Activated CD4-positive, alpha-beta T cell treated with anti-CD3 and anti-CD28 coated beads, Interleukin-2, amount 10 ng/mL, durations not matched to agents 24 days and 14 days (primary cell): ENCODE measurements at regions of chr9 and their contacts with region 1.

Region 1: GRCh38 chr9:129783516-129784361 is 19.2 kb upstream of the TOR1B start:
- DNase-seq: peak; percentile 94
- H3K4me3 Mint-ChIP-seq: no peak overlapping the region
- H3K27ac Mint-ChIP-seq: no peak overlapping the region
- H3K4me1 Mint-ChIP-seq: peaks cover 4% of the 10 kb centered on the region
- H3K27me3 Mint-ChIP-seq: peaks cover 24% of the 10 kb centered on the region

Region 2: DNA sequence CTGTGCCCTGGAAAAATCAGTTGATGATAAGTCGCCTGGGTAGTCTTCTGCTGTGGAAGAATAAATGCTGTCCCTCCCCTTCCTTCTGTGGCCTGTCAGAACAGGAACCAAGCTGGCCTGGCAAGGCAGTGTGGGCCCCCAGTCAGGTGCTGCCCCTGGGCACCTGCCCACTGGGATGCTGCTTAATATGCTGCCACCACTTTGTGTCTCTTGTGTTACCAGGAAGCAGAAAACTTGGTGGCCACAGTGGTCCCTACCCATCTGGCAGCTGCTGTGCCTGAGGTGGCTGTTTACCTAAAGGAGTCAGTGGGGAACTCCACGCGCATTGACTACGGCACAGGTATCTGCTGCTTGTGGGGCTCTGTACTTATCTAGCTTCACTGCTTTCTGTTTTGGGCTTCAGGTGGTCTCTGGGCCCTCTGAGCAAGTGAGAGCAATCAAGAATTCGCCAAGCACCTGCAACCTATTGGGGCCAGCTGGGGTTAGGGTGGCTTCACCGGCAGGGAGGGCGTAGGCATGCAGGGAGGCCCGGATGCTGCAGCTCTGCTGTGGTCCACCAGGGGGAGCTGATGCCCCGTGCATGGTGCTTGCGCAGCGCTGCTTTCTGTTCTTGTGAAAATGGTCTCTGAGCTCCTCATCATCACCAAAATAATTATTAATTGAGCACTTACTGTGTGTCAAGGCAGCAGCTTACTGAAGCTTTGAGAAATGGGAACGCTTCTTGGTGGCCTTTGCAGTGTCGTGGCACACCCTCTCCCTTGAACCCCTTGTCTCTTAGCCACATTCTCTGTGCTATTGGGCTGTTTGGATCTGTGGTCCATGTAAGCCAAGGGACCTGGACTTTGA is 652.2 kb before region 1 on chr9:
- intact Hi-C with region 1: loop called (anchors 5 kb)
- DNase-seq: peak; percentile 96
- H3K4me3 Mint-ChIP-seq: no peak overlapping the region
- H3K27ac Mint-ChIP-seq: no peak overlapping the region
- H3K4me1 Mint-ChIP-seq: peaks cover 5% of the 10 kb centered on the region
- H3K27me3 Mint-ChIP-seq: no peaks in the 10 kb centered on the region